PC-9 (cell line): ENCODE measurements at regions of chr10 and their contacts with region 1.

Region 1: DNA sequence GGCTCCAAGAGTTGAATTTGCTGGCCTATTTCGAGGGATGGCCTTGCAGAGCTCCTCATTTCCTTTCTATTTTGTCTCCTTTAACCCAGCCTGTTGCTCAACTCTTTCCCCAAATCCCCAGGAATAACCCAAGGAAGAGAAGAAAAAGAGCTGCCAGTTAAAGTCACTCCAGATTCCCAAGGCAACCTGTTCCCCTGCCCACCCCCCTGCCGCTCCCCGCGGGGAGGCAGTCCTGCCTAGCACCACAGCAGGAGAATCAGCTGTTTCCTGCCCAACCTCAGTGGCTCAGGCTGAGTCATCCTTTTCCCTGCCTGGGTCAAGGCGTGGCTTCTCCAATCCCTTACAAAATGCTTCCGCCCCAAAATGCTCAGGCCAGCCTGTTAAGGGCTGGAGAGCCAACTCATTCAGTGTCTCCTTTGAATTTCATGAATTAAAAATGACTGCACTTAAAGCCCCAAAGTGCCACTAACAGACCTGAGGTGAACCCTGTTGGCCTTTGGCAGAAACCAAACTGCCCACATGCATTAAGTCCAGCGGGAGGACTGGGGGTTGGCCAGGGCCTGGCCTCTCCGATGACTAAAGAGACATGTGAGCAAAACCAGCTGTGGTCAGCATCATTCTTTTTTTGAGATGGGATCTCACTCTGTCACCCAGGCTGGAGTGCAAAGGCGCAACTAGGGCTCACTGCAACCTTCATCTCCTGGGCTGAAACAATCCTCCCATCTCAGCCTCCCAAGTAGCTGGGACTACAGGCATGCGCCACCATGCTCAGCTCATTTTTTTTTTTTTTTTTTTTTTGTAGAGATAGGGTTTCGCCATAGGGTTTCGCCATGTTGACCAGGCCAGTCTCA is 83.2 kb upstream of the KIF5B start:
- DNase-seq: peak; percentile 86
- H3K4me3 ChIP-seq: no peak overlapping the region
- H3K27ac ChIP-seq: peak overlapping the region; percentile 55
- H3K4me1 ChIP-seq: peaks cover 14% of the 10 kb centered on the region
- H3K27me3 ChIP-seq: no peaks in the 10 kb centered on the region
- CTCF ChIP-seq: no peak

Region 2: GRCh38 chr10:32239770-32240169 is 100.3 kb after region 1 on chr10:
- CTCF ChIA-PET with region 1: interaction called, 13 read pairs
- POLR2A ChIA-PET with region 1: no interaction called
- intact Hi-C with region 1: no loop called
- DNase-seq: peak in 1 of 2 experiments; percentile 76
- H3K4me3 ChIP-seq: no peak overlapping the region
- H3K27ac ChIP-seq: no peak overlapping the region; the same call in 1 of the 2 replicates
- H3K4me1 ChIP-seq: peaks cover 45% of the 10 kb centered on the region
- H3K27me3 ChIP-seq: no peaks in the 10 kb centered on the region
- CTCF ChIP-seq: no peak

Region 3: GRCh38 chr10:32923849-32924248 is 784.4 kb after region 1 on chr10:
- CTCF ChIA-PET with region 1: interaction called, 10 read pairs
- POLR2A ChIA-PET with region 1: no interaction called
- intact Hi-C with region 1: no loop called
- DNase-seq: no peak
- H3K4me3 ChIP-seq: no peak overlapping the region
- H3K27ac ChIP-seq: no peak overlapping the region
- H3K4me1 ChIP-seq: no peaks in the 10 kb centered on the region
- H3K27me3 ChIP-seq: no peaks in the 10 kb centered on the region
- CTCF ChIP-seq: no peak